ENCODE measurements at regions of chr12 and their contacts with region 1.

Region 1: DNA sequence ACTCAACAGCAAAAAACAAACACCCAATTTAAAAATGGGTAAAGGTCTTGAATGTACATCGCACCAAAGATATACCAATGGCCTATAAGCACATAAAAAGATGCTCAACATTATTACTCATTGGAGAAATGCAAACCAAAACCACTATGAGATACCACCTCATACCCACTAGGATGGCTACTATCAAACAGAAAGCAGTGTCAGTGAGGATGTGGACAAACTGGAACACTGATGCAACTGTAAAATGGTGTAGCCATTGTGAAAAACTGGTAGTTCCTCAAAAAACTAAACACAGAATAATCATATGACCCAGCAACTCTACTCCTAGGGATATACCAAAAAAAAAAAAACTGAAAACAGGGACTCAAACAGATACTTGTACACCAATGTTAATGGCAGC is 49.3 kb downstream of the CDK17 start:
- DNase-seq: no peak
- ATAC-seq: peak; percentile 84
- H3K4me3 Mint-ChIP-seq: no peak overlapping the region
- H3K27ac Mint-ChIP-seq: peak overlapping the region; percentile 64
- H3K4me1 Mint-ChIP-seq: peaks cover 78% of the 10 kb centered on the region
- H3K27me3 Mint-ChIP-seq: no peaks in the 10 kb centered on the region

Region 2: DNA sequence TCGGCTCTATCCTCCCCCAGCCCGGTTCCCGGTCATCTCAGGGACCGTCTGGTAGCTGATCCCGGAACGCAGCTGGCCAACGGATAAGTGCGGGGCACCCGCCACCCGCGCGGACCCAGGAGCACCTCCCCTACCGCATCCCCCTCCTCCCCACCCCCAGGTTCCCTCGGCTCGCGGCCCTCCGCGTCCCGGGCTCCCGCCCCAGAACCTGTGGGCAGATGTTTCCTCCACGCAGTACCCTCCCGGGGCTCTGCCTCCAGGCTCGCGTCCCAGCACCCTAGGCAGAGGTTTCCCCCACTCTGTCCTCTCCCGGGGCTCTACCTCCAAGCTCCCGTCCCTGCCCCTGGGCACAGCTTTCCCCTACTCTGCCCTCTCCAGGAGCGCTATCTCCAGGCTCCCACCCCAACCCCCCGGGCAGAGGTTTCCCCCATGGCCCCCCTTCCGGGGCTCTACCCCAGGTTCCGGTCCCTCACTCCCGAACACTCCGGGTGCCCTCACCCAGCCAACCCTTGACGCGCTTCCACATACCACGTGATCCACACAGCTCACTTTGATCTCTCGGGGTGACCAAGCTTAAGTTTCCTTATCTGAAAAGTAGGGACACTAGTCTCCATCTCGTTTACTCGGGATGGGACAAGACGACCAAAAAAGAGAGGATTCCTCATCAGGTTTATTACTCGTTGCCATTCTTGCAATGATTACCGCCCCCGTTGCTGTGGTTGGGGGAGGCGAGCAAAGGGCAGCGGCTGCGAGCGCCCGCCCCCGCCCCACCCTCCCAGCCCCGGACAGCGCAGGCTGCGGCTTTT is 408.3 kb before region 1 on chr12 and contains the start of gene CCDC38:
- CTCF ChIA-PET with region 1: no interaction called
- POLR2A ChIA-PET with region 1: no interaction called
- intact Hi-C with region 1: no loop called
- DNase-seq: peak; percentile 91
- ATAC-seq: peak; percentile 98
- H3K4me3 Mint-ChIP-seq: peak within 1 kb of the TSS; percentile 84
- H3K27ac Mint-ChIP-seq: peak within 1 kb of the TSS; percentile 91
- H3K4me1 Mint-ChIP-seq: peaks cover 4% of the 10 kb centered on the region
- H3K27me3 Mint-ChIP-seq: no peaks in the 10 kb centered on the region
- total RNA-seq, gene CCDC38: 0.21 TPM in 1 of 2 experiments, not detected in the other

Region 3: DNA sequence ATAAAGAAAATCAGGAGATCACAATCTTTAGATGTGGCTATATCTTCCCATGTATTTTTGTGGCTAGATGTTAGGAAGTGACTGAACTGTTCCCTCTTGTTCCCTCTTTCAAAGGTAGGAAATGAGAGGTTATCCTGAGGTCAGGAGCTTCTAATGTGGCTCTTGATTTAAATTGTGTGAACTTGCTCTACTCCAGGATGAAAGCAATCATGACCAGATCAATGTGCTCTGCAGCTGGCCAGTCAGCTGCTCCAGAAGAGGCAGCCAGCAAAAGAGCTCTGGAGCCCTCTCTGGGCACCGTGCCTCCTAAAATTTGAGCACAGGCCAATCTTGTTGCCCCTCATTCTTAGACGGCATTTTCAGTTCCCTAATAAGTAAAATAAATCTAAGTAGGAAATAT is 17.3 kb after region 1 on chr12:
- CTCF ChIA-PET with region 1: interaction called, 6 read pairs
- POLR2A ChIA-PET with region 1: no interaction called
- intact Hi-C with region 1: loop called in 1 of 2 experiments (anchors 2 kb)
- DNase-seq: no peak
- ATAC-seq: no peak
- H3K4me3 Mint-ChIP-seq: no peak overlapping the region
- H3K27ac Mint-ChIP-seq: no peak overlapping the region
- H3K4me1 Mint-ChIP-seq: peaks cover 71% of the 10 kb centered on the region
- H3K27me3 Mint-ChIP-seq: no peaks in the 10 kb centered on the region

Measured in activated CD4-positive, alpha-beta T cell treated with anti-CD3 and anti-CD28 coated beads for 36 hours (primary cell).